ENCODE measurements at regions of chr14 and their contacts with region 1.

Region 1: DNA sequence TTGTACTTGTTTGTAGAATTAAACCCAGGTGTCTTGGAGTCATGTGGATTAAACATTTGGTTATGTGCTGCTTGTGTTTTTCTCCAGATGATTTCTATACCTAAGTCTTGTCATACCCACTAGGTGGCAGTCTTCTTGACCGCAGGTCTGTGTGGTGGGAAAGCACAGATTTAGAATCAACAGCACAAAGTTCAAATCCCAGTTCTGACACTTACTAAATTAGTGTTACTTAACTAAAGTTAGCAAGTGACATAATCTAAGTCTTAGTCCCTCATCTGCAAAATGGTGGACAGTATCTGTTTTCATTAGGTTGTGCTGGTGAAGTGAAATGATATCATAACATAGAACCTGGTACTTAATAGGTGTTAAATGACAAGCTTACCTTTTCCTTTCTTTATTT is 151.0 kb upstream of the ARHGAP5 start:
- DNase-seq: no peak
- H3K4me3 ChIP-seq: no peak overlapping the region
- H3K27ac ChIP-seq: no peak overlapping the region
- H3K4me1 ChIP-seq: no peaks in the 10 kb centered on the region
- H3K27me3 ChIP-seq: no peaks in the 10 kb centered on the region
- CTCF ChIP-seq: peak in 2 of 3 experiments; percentile 67 to 69; a peak in 3 of 4 replicates
- EP300 ChIP-seq: no peak
- POLR2A ChIP-seq: no peak
- RAD21 ChIP-seq: peak; percentile 66 to 74

Region 2: DNA sequence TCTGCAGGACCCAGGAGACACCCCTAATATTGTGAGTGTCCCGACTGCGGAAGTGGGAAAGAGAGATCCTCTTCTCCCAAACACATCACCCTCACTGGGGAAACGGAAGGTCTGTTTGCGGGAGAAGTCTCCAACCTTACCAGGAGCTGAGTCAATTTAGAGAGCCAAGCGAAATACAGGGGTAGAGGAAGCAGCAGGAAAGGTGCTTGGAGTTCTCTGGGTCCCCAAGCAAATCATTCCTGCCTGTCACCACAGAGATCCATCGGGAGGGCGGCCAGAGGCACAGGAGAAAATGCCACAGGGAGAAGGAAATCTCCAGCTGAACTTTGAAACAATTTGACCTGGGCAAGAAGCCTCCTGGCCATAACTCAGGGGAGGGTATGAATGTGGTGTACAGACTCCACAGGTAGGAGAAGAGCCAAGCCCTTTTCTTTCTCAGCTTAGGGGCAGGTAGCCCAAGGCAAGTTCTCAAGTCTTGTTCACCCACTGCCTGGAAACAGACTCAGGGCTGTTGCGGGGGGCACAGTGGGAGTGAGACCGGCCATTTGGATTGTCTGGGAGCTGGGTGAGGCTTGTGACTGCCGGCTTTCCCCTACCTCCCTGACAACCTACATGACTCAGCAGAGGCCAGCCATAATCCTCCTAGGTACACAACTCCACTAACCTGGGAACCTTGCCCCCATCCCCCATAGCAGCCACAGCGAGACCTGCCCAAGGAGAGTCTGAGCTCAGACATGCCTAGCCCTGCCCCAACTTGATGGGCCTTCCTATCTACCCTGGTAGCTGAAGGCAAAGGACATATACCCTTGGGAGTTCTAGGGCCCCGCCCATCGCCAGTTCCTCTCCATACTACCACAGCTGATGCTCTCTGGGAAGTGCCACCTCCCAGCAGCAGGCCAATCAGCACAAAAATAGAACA is 60.9 kb before region 1 on chr14:
- CTCF ChIA-PET with region 1: no interaction called
- POLR2A ChIA-PET with region 1: no interaction called
- DNase-seq: no peak
- H3K4me3 ChIP-seq: no peak overlapping the region
- H3K27ac ChIP-seq: no peak overlapping the region
- H3K4me1 ChIP-seq: no peaks in the 10 kb centered on the region
- H3K27me3 ChIP-seq: no peaks in the 10 kb centered on the region
- CTCF ChIP-seq: no peak
- EP300 ChIP-seq: no peak
- POLR2A ChIP-seq: no peak
- RAD21 ChIP-seq: no peak

Region 3: GRCh38 chr14:31913370-31913769 is 12.8 kb before region 1 on chr14:
- CTCF ChIA-PET with region 1: interaction called, 32 read pairs
- POLR2A ChIA-PET with region 1: no interaction called
- DNase-seq: no peak
- H3K4me3 ChIP-seq: no peak overlapping the region
- H3K27ac ChIP-seq: no peak overlapping the region
- H3K4me1 ChIP-seq: no peaks in the 10 kb centered on the region
- H3K27me3 ChIP-seq: no peaks in the 10 kb centered on the region
- CTCF ChIP-seq: no peak
- EP300 ChIP-seq: no peak
- POLR2A ChIP-seq: no peak
- RAD21 ChIP-seq: no peak

Region 4: DNA sequence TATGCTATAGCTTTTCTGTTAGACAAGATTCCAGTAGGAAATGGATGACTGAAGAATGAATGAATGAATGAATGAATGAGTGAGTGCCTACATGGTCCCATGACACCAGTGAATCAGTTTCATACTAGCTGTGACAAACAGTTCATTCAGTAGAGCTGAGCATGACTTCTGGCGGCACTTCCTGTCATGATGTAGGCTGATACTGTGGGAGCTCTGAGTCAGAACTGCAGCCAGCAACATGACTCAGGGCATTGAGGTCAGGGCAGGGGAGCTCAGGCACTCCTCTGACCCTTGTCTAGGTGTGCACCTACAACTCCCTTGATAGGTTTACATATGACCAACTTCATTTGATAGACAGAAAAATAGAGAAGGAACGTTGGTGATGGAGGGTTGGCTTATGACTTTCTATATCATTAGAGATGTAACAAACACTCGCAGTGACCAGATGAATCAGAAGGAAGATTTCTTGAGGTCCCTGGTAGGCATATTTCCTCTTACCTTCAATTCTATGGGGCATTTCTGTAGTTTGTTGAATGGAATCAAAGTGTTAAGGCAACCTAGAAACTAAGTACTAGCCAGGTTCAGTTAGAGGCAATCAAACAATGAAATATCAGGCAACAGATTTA is 11.7 kb after region 1 on chr14:
- CTCF ChIA-PET with region 1: interaction called, 38 read pairs
- POLR2A ChIA-PET with region 1: no interaction called
- DNase-seq: no peak
- H3K4me3 ChIP-seq: no peak overlapping the region
- H3K27ac ChIP-seq: no peak overlapping the region
- H3K4me1 ChIP-seq: peaks cover 0 to 9% (median 2%) of the 10 kb centered on the region in 4 experiments; a peak in 3 of 7 replicates
- H3K27me3 ChIP-seq: peaks cover 0 to 1% (median 0%) of the 10 kb centered on the region in 4 experiments; a peak in 2 of 7 replicates
- CTCF ChIP-seq: no peak
- EP300 ChIP-seq: no peak
- POLR2A ChIP-seq: no peak
- RAD21 ChIP-seq: no peak

Region 5: DNA sequence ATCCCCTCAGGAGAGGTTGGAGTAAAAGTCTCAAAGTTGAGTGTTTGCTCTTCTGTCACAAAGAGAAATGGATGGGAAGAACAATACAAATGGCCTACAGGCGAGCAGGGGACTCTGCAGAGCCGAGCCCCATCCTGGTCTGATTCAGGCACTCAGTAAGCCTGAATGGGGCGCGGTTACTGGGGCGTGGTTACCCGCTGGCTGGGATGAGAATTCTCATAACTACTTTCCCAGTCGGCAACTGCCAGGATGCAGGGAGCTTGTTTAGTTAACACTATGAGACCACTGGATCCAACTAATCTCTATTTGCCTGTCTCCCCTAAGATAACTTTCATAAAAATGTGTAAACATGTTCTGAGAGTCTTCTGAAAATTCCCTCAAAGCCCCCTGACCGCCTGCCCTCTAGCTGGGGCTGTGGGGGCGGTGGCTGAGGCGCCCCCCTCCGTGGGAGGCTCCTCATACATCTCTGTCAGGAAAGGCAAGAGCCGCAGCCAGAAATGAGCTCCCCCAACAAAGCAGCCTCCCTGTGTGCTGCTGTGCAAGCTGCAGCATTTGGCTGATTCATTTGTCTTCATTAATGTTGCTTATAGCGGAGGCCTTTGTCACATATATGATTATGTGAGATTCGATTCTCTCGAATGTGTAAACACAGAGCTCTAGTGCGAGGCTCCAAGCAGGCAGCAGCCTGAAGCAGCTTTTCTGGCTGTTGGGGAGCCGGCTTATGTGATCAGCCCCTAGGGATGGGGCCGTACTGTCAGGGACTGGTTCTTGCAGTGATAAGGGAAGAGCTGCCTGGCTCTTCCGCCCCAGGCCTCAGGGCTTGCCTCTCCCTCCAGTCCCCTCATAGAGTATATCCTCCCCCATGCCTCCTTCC is 24.9 kb after region 1 on chr14:
- CTCF ChIA-PET with region 1: interaction called, 16 read pairs
- POLR2A ChIA-PET with region 1: no interaction called
- DNase-seq: peak in 1 of 2 experiments; percentile 68
- H3K4me3 ChIP-seq: no peak overlapping the region
- H3K27ac ChIP-seq: no peak overlapping the region
- H3K4me1 ChIP-seq: peaks cover 4 to 9% (median 6%) of the 10 kb centered on the region in 4 experiments; a peak in 5 of 7 replicates
- H3K27me3 ChIP-seq: no peaks in the 10 kb centered on the region
- CTCF ChIP-seq: no peak
- EP300 ChIP-seq: no peak
- POLR2A ChIP-seq: no peak
- RAD21 ChIP-seq: no peak